Caco-2 (cell line): ENCODE measurements at regions of chr12 and their contacts with region 1.

Region 1: DNA sequence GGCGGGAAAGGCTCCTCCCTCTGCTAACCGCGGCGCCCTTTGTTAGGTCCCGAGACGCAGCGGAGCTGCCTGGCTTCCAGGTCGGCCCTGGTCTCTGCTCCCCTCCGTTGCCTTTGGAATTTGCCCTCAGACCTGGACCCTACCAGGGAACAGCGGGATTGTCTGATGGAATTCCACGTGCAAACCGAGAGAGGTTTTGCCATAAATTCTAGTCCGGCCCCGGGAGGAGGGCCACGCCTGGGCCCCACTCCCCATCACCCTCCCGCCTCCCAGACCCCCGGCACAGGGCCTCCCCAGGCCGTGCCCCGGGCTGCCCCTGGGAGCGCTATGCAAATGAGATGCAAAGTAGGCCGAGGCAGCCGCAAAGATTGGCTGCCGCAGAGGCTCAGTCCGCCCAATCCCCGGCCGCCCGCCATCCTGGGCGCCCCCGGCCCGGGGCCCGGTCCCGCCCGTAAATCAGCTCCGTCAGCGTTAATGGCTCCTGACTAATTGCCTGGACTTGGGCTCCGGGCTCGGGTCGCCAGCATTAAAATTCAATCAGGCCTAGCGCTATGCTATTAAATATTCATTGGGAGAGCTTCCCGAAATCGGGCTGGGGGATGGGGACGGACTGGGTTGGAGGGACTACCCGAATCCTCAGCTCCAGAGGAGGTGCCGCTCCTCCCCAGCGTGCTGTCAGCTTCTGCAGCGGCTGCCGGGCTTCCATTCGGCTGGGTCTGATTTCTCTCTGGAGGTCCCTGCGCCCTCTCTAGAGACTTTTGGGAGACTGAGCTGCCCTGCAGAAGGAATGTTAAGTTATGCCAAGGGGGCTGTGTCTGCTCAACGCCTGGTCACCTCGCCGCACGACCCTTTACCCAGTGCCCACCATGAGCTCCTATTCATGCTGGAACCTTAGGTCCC is 15.7 kb upstream of the FIGNL2 start:
- DNase-seq: peak; percentile 88 to 91
- H3K4me3 ChIP-seq: peak overlapping the region; percentile 50
- H3K4me3 Mint-ChIP-seq: peak overlapping the region; percentile 68
- H3K27ac Mint-ChIP-seq: peak overlapping the region; percentile 75
- H3K4me1 ChIP-seq: peaks cover 36% of the 10 kb centered on the region
- H3K4me1 Mint-ChIP-seq: peaks cover 22% of the 10 kb centered on the region
- H3K27me3 ChIP-seq: no peaks in the 10 kb centered on the region
- H3K27me3 Mint-ChIP-seq: no peaks in the 10 kb centered on the region
- CTCF ChIP-seq: no peak

Region 2: GRCh38 chr12:51284476-51284875 is 579.7 kb before region 1 on chr12:
- CTCF ChIA-PET with region 1: no interaction called
- POLR2A ChIA-PET with region 1: no interaction called
- intact Hi-C with region 1: no loop called
- DNase-seq: no peak
- H3K4me3 ChIP-seq: no peak overlapping the region
- H3K4me3 Mint-ChIP-seq: no peak overlapping the region
- H3K27ac Mint-ChIP-seq: peak overlapping the region; percentile 35
- H3K4me1 ChIP-seq: no peaks in the 10 kb centered on the region
- H3K4me1 Mint-ChIP-seq: peaks cover 6% of the 10 kb centered on the region
- H3K27me3 ChIP-seq: no peaks in the 10 kb centered on the region
- H3K27me3 Mint-ChIP-seq: no peaks in the 10 kb centered on the region
- CTCF ChIP-seq: no peak

Region 3: DNA sequence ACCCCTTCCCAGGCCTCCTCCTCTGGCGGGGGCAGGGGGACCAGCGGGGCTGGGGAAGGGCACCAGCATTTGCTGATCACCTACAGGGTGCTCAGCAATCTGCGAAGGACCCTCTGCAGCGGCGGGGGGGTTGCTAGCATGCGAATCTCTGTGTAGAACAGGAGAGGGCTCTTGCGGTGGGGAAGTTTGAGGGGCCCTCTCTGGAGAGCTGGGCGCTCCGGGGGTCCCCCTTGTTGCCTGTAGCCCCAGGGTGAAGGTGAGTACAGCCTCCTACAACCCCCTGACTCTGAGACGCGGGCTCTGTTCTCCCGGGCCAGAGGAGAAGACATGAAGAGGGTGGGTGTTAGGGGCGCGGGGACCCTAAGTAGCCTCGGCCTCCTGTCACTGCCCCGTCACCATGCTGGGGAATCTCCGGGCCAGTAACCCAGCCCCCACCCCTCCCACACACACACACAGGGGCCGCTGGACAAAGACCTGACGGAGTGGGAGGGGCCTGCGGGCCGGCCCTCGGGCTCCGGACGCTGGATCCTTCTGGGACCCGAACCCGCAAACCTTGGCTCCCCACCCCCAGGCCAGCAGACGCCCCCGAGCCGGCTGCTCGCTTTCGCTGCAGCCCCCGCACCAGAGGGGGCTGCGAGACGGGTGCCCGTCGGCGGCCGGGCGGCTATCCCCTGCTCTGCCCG is 16.4 kb before region 1 on chr12:
- CTCF ChIA-PET with region 1: interaction called, 4 read pairs
- POLR2A ChIA-PET with region 1: interaction called, 4 read pairs
- intact Hi-C with region 1: loop called (anchors 1 kb)
- DNase-seq: peak; percentile 57 to 65
- H3K4me3 ChIP-seq: peak overlapping the region; percentile 83
- H3K4me3 Mint-ChIP-seq: peak overlapping the region; percentile 84
- H3K27ac Mint-ChIP-seq: peak overlapping the region; percentile 46
- H3K4me1 ChIP-seq: peaks cover 27% of the 10 kb centered on the region
- H3K4me1 Mint-ChIP-seq: peaks cover 17% of the 10 kb centered on the region
- H3K27me3 ChIP-seq: no peaks in the 10 kb centered on the region
- H3K27me3 Mint-ChIP-seq: no peaks in the 10 kb centered on the region
- CTCF ChIP-seq: no peak